Ovary (tissue), 10 donors: ENCODE measurements at regions of chr20 and their contacts with region 1.

Region 1: DNA sequence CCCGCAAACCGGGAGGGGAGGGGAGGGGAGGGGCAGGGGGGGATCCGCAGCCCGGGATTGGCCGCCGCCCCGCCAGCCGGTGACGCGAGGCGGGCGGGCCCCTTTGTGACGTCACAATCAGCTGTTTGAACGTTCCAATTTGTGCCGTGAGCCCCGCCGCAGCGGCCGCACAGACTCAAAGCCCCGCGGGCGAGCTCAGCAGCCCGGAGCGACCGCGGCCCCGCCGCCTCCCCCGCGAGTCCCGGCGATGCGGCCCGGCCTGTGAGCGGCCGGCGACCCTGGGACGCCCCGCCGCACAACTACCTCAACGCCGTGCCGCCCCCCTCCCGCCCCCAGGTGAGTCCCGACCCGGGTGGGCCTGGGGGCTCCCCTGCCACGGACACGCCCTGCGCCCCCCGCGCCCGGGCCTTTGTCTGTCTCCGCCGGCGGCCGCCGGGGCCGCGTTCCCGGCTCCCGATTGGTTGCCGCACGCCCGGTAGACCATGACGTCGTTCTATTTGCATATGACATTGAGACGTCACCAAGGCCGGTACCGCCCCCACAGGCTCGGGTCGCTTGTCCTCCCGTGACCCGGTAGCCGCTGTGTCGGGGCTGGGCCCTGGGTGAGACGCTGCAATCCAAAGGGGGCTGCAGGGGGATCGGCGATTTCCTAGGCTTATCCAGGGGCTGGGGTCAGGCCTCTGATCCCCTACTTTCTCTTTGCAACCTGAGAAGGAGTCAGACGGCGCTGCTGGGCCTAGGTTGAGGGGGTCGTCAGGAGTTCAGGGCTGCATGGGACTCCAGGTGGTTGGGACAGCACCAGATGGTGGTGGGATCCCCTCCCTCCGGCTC is at the start of gene TP53INP2:
- DNase-seq: peak; percentile 90 to 95 (median 93)
- H3K4me3 ChIP-seq: peak within 1 kb of the TSS; percentile 68
- H3K27ac ChIP-seq: peak within 1 kb of the TSS; percentile 98 to 100
- H3K4me1 ChIP-seq: peaks cover 3% of the 10 kb centered on the region
- H3K27me3 ChIP-seq: no peaks in the 10 kb centered on the region
- CTCF ChIP-seq: peak in 2 of 3 donors; percentile 4 to 30
- EP300 ChIP-seq: no peak
- POLR2A ChIP-seq: peak; percentile 87
- total RNA-seq, gene TP53INP2: 4.9 to 16.0 (median 13.3) TPM

Region 2: GRCh38 chr20:34538671-34539123 is 165.7 kb before region 1 on chr20:
- intact Hi-C with region 1: loop called in 1 of 4 experiments (anchors 10 kb)
- DNase-seq: peak in 3 of 5 donors; percentile 34 to 51 (median 48)
- H3K4me3 ChIP-seq: no peak overlapping the region
- H3K27ac ChIP-seq: no peak overlapping the region
- H3K4me1 ChIP-seq: no peaks in the 10 kb centered on the region
- H3K27me3 ChIP-seq: no peaks in the 10 kb centered on the region
- CTCF ChIP-seq: peak; percentile 15 to 53 (median 33)
- EP300 ChIP-seq: no peak
- POLR2A ChIP-seq: no peak

Region 3: GRCh38 chr20:34558320-34559218 is 145.8 kb before region 1 on chr20 and contains the start of gene MAP1LC3A:
- intact Hi-C with region 1: loop called in 1 of 4 experiments (anchors 2 kb)
- DNase-seq: peak; percentile 97 to 98 (median 98)
- H3K4me3 ChIP-seq: peak within 1 kb of the TSS; percentile 98
- H3K27ac ChIP-seq: peak within 1 kb of the TSS; percentile 91 to 98
- H3K4me1 ChIP-seq: no peaks in the 10 kb centered on the region
- H3K27me3 ChIP-seq: no peaks in the 10 kb centered on the region
- CTCF ChIP-seq: peak in 1 of 3 donors; percentile 50
- EP300 ChIP-seq: peak; percentile 56
- POLR2A ChIP-seq: peak; percentile 78
- total RNA-seq, gene MAP1LC3A: 27.2 to 66.1 (median 36.0) TPM